ENCODE measurements at regions of chr20 and their contacts with region 1.

Region 1: DNA sequence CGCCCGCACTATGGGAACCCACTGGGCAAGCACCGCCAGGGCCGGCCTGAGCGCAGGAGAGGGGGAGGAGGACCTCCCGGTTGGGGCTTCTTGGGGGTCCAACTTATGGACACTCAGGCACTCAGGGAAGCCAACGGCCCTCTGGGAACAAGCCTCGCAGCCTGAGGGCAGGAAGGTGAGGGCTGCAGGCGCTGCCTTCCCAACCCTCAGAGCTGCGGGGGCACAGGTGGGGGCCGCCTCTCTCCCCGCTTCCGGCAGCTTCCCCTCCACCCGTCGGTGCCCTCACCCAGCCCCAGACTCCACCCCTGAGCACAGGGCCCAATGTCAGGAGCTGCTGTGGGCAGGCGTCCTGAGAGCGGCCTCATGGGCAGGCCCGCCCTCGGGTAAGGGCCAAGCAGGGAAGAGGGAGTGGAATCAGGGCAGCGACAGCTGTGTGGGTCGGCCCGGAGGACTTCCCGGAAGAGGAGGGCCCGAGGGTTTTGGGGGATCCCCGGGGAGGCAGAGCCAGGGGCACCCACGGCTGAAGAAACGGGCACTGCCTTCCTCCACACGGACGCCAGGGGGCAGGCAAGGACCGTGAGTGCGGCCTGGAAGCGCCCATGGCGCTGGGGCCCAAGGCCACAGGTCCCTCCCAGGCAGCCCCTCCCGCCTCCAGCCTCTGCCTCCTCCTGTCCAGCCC is 488 bp upstream of the PTK6 start:
- DNase-seq: peak; percentile 71 to 97
- H3K4me3 ChIP-seq: peak overlapping the region in 3 of 4 experiments; percentile 24 to 48 (median 25); a peak in 4 of 8 replicates
- H3K27ac ChIP-seq: no peak overlapping the region
- H3K4me1 ChIP-seq: peaks cover 0 to 23% (median 3%) of the 10 kb centered on the region in 4 experiments; a peak in 5 of 7 replicates
- H3K27me3 ChIP-seq: no peaks in the 10 kb centered on the region
- CTCF ChIP-seq: peak; percentile 92 to 95 (median 92)
- EP300 ChIP-seq: no peak
- POLR2A ChIP-seq: no peak
- RAD21 ChIP-seq: peak; percentile 96 to 98

Region 2: DNA sequence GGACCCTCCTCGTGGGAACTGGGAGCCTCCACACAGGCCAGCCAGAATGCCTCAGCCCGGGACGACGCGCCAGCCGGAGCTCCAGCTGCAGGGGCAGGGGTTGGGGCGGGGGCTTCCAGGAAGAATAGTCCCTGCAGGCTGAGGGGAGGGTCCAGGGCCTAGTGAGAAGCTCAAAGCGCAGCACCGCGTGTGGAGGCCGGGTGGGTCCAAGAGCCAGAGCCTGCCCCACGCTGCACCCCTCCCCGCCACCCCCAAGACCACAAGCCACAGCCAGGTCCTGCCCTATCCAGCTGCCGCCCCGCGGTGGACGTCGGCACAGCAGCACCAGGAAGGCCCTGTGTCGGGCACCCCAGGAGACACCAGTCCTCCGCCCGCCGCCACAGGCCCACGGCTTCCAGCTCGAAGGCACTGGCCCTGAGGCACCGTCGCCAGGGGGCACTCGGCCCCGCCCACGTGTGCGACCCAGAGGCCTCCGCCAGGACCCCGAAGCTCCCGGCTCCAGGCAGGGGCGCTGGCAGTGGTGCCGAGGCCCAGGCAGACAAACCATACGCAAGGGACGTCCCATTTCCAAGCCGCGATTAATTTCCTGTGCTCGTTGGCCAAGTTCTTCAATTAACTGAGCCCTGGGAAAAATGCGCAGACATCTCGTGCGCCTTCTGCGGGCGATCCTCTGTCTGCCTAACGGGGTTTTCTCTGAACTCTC is 84.7 kb before region 1 on chr20:
- CTCF ChIA-PET with region 1: no interaction called
- POLR2A ChIA-PET with region 1: no interaction called
- DNase-seq: no peak
- H3K4me3 ChIP-seq: no peak overlapping the region
- H3K27ac ChIP-seq: no peak overlapping the region
- H3K4me1 ChIP-seq: peaks cover 0 to 31% (median 21%) of the 10 kb centered on the region in 4 experiments; a peak in 5 of 7 replicates
- H3K27me3 ChIP-seq: no peaks in the 10 kb centered on the region
- CTCF ChIP-seq: peak in 1 of 3 experiments; percentile 3; a peak in 1 of 4 replicates
- EP300 ChIP-seq: no peak
- POLR2A ChIP-seq: no peak
- RAD21 ChIP-seq: no peak; a peak in 1 of 4 replicates

Region 3: GRCh38 chr20:63520504-63520933 is 17.1 kb before region 1 on chr20 and contains the start of gene PPDPF:
- CTCF ChIA-PET with region 1: interaction called, 16 read pairs
- POLR2A ChIA-PET with region 1: interaction called, 59 read pairs
- DNase-seq: peak; percentile 39 to 88
- H3K4me3 ChIP-seq: peak within 1 kb of the TSS; percentile 66 to 99 (median 88)
- H3K27ac ChIP-seq: peak within 1 kb of the TSS; percentile 87
- H3K4me1 ChIP-seq: peaks cover 0 to 21% (median 10%) of the 10 kb centered on the region in 4 experiments; a peak in 5 of 7 replicates
- H3K27me3 ChIP-seq: peaks cover 0 to 6% (median under 1%) of the 10 kb centered on the region in 4 experiments; a peak in 2 of 7 replicates
- CTCF ChIP-seq: no peak
- EP300 ChIP-seq: no peak
- POLR2A ChIP-seq: peak; percentile 70 to 87
- RAD21 ChIP-seq: no peak
- total RNA-seq, gene PPDPF: 125 and 138 TPM in 2 replicates

Region 4: DNA sequence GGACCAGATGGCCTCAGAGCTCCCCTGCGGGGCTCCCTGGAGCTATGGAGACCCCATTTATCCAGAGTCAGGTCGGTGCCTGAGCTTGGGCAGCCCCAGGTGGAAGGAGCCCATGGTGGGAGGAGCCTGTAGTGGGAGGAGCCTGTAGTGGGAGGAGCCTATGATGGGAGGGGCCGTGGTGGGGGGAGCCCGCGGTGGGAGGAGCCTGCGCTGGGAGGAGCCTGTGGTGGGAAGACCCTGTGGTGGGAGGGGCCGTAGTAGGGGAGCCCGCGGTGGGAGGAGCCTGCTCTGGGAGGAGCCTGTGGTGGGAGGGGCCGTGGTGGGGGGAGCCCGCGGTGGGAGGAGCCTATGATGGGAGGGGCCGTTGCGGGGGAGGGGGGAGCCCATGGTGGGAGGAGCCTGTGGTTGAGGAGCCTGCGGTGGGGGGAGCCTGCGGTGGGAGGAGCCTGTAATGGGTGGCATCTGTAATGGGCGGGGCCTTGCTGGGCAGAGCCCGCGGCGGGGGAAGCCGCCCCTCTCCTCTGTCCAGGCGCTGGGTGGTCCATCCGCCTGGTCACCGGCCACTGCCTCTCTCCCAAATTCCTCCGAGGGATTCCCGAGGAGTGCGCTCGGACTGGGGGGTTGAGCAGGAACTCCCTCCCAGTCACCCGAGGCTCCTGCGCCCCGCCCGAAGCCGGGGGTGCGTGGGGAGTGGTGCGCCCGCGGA is 15.7 kb after region 1 on chr20:
- CTCF ChIA-PET with region 1: interaction called, 22 read pairs
- POLR2A ChIA-PET with region 1: interaction called, 7 read pairs
- DNase-seq: peak; percentile 92 to 99
- H3K4me3 ChIP-seq: peak overlapping the region; percentile 57 to 99 (median 81)
- H3K27ac ChIP-seq: no peak overlapping the region; the same call in 1 of the 2 replicates
- H3K4me1 ChIP-seq: peaks cover 0 to 28% (median 16%) of the 10 kb centered on the region in 4 experiments; a peak in 6 of 7 replicates
- H3K27me3 ChIP-seq: no peaks in the 10 kb centered on the region; a peak in 1 of 7 replicates
- CTCF ChIP-seq: no peak
- EP300 ChIP-seq: no peak
- POLR2A ChIP-seq: 0 out of 3 replicates have a peak, but pooled peaks of 1 of the 2 experiments have one; percentile 36
- RAD21 ChIP-seq: no peak

Region 5: DNA sequence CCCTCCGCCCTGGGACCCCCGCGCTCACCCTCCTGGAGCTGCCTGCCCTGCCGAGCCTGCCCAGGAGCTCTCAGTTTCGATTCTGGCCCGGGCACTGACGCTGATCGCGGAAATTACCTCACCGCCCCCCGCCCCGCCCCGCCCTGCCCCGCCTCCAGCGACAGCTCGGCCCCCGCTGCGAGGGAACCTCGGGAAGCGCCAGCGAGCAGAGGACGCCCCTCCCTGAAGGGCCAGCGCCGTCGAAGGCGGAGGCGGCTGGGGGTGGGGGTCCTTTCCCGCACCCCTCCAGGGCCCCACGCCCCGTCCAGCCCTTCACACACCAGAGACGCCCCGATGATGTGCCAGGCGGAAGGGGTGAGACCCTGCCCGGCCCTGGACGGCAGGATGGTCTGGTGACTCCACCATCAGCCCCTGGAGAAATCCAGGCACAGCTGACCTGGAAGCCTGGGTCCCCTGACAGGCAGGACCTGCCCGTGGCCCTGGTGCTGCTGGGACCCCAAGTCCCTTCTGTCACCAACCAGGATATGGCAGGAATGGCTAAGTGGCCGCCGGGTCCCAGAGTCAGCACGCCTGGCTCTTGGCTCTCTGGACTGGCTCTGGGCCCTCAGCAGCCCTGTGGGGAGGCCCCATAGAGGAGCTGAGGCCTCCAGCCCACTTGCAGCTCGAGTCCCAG is 36.6 kb after region 1 on chr20 and contains the start of gene HELZ2:
- CTCF ChIA-PET with region 1: interaction called, 20 read pairs
- POLR2A ChIA-PET with region 1: interaction called, 3 read pairs
- DNase-seq: peak in 1 of 2 experiments; percentile 78
- H3K4me3 ChIP-seq: peak within 1 kb of the TSS; percentile 32 to 77 (median 61)
- H3K27ac ChIP-seq: no peak within 1 kb of the TSS
- H3K4me1 ChIP-seq: peaks cover 0 to 6% (median 6%) of the 10 kb centered on the region in 4 experiments; a peak in 6 of 7 replicates
- H3K27me3 ChIP-seq: no peaks in the 10 kb centered on the region; a peak in 1 of 7 replicates
- CTCF ChIP-seq: no peak
- EP300 ChIP-seq: no peak
- POLR2A ChIP-seq: no peak
- RAD21 ChIP-seq: no peak
- total RNA-seq, gene HELZ2: 17.5 and 18.2 TPM in 2 replicates

Region 6: DNA sequence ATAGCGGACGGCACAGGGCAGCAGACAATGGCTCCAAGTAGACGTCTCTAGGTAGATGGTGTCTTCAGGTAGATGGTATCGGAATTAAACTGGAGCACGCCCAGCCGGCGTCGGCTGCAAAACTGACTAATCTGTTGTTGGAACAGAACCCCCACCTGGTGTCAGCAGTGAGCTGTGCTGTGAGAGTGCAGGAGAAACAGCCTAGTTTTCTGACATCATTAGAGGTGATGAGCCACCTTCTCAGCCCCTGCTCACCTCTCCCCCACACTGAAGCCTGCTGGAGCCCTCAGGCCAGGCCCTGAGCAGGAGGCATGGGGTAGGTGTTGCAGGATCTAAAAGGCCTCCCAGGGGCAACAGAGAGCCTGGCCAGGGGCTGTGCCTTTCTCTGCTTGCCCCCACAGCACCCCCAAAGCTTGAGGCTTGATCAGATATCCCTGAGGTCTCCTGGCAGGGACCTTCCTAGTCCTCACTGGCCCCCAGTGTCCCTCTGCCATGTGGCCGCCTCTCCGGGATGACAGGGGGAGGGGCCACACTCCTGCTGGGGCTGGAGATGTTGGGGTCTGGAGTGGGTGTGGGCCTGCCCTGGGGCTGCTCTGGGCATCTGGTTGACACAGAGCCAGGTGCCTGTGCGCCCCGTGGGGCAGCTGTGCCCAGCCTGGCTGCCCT is 43.3 kb after region 1 on chr20:
- CTCF ChIA-PET with region 1: interaction called, 19 read pairs
- POLR2A ChIA-PET with region 1: interaction called, 4 read pairs
- DNase-seq: no peak
- H3K4me3 ChIP-seq: no peak overlapping the region
- H3K27ac ChIP-seq: no peak overlapping the region
- H3K4me1 ChIP-seq: no peaks in the 10 kb centered on the region; a peak in 2 of 7 replicates
- H3K27me3 ChIP-seq: no peaks in the 10 kb centered on the region
- CTCF ChIP-seq: peak; percentile 48 to 58 (median 52)
- EP300 ChIP-seq: no peak
- POLR2A ChIP-seq: no peak
- RAD21 ChIP-seq: peak; percentile 66 to 77

Region 7: DNA sequence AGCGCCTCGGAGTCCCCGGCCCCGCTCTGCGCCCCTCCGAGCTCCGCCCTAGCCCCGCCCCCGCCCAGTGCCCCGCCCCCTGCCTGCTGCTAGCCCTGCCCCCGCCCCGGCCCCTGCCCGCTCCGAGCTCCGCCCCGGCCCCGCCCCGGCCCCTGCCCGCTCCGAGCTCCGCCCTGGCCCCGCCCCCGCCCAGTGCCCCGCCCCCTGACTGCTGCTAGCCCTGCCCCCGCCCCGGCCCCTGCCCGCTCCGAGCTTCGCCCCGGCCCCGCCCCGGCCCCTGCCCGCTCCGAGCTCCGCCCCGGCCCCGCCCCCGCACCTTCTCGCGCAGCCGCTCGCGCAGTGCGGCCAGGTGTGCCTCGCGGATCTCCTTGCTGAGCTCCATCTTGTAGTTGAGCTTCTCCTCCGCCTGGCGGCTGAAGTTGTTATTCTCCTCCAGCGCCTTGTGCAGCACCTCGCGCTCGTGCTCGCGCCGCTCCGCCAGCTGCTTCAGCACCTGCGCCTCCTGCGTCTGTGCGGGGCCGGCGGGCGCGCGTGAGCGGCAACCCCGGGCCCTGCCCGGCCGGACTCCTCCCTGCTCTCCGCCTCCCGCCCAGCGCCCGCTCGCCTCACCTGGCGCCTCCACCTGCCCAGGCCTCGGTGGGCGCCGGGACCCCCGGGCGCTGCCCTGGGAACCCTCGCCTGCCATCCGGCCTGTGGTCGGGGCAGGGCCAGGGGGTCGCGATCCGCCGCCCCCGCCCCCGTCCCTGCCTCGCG is 104.3 kb after region 1 on chr20:
- CTCF ChIA-PET with region 1: interaction called, 17 read pairs
- POLR2A ChIA-PET with region 1: interaction called, 4 read pairs
- DNase-seq: peak in 1 of 2 experiments; percentile 97
- H3K4me3 ChIP-seq: peak overlapping the region; percentile 34 to 67 (median 49)
- H3K27ac ChIP-seq: peak overlapping the region; percentile 28; the same call in 1 of the 2 replicates
- H3K4me1 ChIP-seq: peaks cover 0 to 16% (median 1%) of the 10 kb centered on the region in 4 experiments; a peak in 3 of 7 replicates
- H3K27me3 ChIP-seq: no peaks in the 10 kb centered on the region; a peak in 1 of 7 replicates
- CTCF ChIP-seq: peak; percentile 40 to 63 (median 55)
- EP300 ChIP-seq: no peak
- POLR2A ChIP-seq: peak in 1 of 2 experiments; percentile 63; a peak in 1 of 3 replicates
- RAD21 ChIP-seq: peak; percentile 51 to 52